ENCODE measurements at regions of chr15 and their contacts with region 1.

Region 1: DNA sequence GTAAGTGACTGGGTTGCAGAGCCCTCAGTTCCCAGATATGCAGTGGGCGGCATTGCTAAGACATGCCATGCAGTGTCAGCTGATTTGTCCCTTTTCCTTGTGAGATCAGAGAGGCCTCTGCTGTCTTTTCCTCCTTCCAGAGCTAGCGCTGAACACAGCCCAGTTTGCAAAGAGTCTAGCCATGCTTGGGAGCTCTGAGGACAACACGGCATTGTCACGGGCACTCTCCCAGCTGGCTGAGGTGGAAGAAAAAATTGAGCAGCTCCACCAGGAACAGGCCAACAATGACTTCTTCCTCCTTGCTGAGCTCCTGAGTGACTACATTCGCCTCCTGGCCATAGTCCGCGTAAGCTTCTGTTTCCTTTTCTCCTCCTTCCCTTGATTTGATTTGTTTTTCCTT is 20.0 kb upstream of the SNX22 start:
- DNase-seq: no peak
- H3K4me3 ChIP-seq: no peak overlapping the region
- H3K27me3 ChIP-seq: no peaks in the 10 kb centered on the region
- CTCF ChIP-seq: no peak

Region 2: GRCh38 chr15:64144565-64145281 is 13.2 kb after region 1 on chr15:
- CTCF ChIA-PET with region 1: interaction called, 11 read pairs
- POLR2A ChIA-PET with region 1: no interaction called
- DNase-seq: no peak
- H3K4me3 ChIP-seq: no peak overlapping the region
- H3K27me3 ChIP-seq: no peaks in the 10 kb centered on the region
- CTCF ChIP-seq: no peak